Common myeloid progenitor, CD34-positive (primary cell): ENCODE measurements at regions of chr7 and their contacts with region 1.

Region 1: GRCh38 chr7:143408686-143409561 is at the start of gene EPHA1:
- DNase-seq: peak in 2 of 3 donors; percentile 80 to 88
- H3K4me3 ChIP-seq: peak within 1 kb of the TSS in 6 of 7 experiments; percentile 48 to 75 (median 67)
- H3K27ac ChIP-seq: no peak within 1 kb of the TSS
- H3K4me1 ChIP-seq: peaks cover 27 to 77% (median 56%) of the 10 kb centered on the region in 4 experiments
- H3K27me3 ChIP-seq: no peaks in the 10 kb centered on the region

Region 2: GRCh38 chr7:143372070-143372469 is 36.9 kb before region 1 on chr7:
- CTCF ChIA-PET with region 1: interaction called, 10 read pairs
- POLR2A ChIA-PET with region 1: interaction called, 4 read pairs
- DNase-seq: peak; percentile 66 to 91 (median 80)
- H3K4me3 ChIP-seq: no peak overlapping the region
- H3K27ac ChIP-seq: no peak overlapping the region
- H3K4me1 ChIP-seq: peaks cover 24 to 53% (median 48%) of the 10 kb centered on the region in 4 experiments
- H3K27me3 ChIP-seq: no peaks in the 10 kb centered on the region

Region 3: DNA sequence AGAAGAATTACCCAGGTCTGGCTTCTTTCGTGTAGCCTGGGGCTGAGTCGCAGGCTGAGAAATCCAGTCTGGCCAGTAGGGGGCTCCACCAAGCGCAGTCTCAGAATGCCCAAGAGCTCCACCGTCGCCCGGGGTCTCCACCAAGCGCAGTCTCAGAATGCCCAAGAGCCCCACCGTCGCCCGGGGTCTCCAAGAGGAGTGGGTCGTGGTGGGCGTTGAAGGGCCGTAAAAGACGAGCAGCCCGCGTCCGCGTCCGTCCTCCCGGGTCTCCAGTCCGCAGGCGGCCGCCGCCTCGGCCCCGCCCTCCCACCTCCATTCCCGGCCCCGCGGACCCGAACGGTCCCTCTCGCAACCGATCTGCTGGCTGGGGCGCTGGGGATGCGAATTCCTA is 28.7 kb before region 1 on chr7:
- CTCF ChIA-PET with region 1: interaction called, 12 read pairs
- POLR2A ChIA-PET with region 1: interaction called, 6 read pairs
- DNase-seq: peak; percentile 93 to 97 (median 95)
- H3K4me3 ChIP-seq: peak overlapping the region; percentile 78 to 95 (median 88)
- H3K27ac ChIP-seq: peak overlapping the region; percentile 92 to 94
- H3K4me1 ChIP-seq: peaks cover 31 to 85% (median 66%) of the 10 kb centered on the region in 4 experiments
- H3K27me3 ChIP-seq: no peaks in the 10 kb centered on the region

Region 4: GRCh38 chr7:143391462-143392404 is 17.2 kb before region 1 on chr7:
- CTCF ChIA-PET with region 1: interaction called, 40 read pairs
- POLR2A ChIA-PET with region 1: interaction called, 5 read pairs
- DNase-seq: no peak
- H3K4me3 ChIP-seq: no peak overlapping the region
- H3K27ac ChIP-seq: no peak overlapping the region
- H3K4me1 ChIP-seq: peaks cover 0 to 42% (median 35%) of the 10 kb centered on the region in 4 experiments
- H3K27me3 ChIP-seq: no peaks in the 10 kb centered on the region